CD4-positive, alpha-beta T cell (primary cell): ENCODE measurements at regions of chr2 and their contacts with region 1.

Region 1: DNA sequence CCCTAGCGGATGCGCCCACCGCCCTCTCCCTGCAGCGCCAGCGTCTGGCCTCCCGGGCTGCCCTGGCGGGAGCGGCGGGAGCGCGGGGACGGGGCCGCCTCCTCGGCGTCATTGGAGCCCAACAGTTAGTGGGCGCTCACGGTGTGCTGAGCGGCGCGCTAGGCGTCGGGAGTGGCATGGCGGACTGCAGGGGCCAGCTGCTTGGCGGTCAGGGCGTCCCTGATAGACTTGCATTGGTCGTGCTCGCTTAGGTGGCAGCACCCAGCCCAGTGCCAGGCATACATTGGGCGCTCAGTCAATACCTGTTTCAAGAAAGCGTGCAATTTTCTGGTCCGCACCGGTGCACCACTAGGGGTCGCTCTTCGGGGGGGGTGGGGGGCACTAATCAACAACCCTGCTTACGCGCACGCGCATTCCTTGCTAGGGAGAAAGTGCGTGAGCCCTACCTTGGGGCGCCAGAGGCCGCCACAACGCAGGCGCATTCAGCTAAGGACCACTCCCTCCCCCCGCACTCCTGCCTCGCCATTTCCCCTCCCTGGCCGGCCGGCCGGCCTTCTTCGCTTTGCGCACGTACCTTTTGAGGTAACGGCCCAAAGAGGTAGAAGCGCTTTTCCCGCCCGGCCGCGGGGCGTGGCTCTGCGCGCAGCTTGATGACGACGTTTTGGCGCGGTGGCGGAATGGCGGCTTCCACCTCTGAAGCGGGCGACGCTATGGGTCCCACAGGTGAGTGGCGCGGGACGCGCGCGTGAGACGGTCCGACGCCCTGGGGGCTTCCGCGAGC is 411 bp upstream of the MZT2A start:
- DNase-seq: peak; percentile 83 to 98 (median 93)
- ATAC-seq: peak; percentile 71
- H3K4me3 ChIP-seq: peak overlapping the region; percentile 83
- H3K4me3 Mint-ChIP-seq: peak overlapping the region; percentile 98
- H3K27ac ChIP-seq: peak overlapping the region; percentile 94 to 96
- H3K27ac Mint-ChIP-seq: peak overlapping the region; percentile 98
- H3K4me1 ChIP-seq: peaks cover 45% of the 10 kb centered on the region
- H3K4me1 Mint-ChIP-seq: peaks cover 30% of the 10 kb centered on the region
- H3K27me3 ChIP-seq: no peaks in the 10 kb centered on the region
- H3K27me3 Mint-ChIP-seq: no peaks in the 10 kb centered on the region
- CTCF ChIP-seq: peak; percentile 87

Region 2: GRCh38 chr2:130372055-130372832 is 1120.4 kb before region 1 on chr2:
- CTCF ChIA-PET with region 1: no interaction called
- POLR2A ChIA-PET with region 1: no interaction called
- intact Hi-C with region 1: loop called in 1 of 2 experiments (anchors 10 kb)
- DNase-seq: peak; percentile 57 to 85 (median 72)
- ATAC-seq: peak; percentile 83
- H3K4me3 ChIP-seq: peak overlapping the region; percentile 76
- H3K4me3 Mint-ChIP-seq: peak overlapping the region; percentile 92
- H3K27ac ChIP-seq: peak overlapping the region; percentile 70 to 80
- H3K27ac Mint-ChIP-seq: peak overlapping the region; percentile 97
- H3K4me1 ChIP-seq: peaks cover 71% of the 10 kb centered on the region
- H3K4me1 Mint-ChIP-seq: peaks cover 73% of the 10 kb centered on the region
- H3K27me3 ChIP-seq: no peaks in the 10 kb centered on the region
- H3K27me3 Mint-ChIP-seq: no peaks in the 10 kb centered on the region
- CTCF ChIP-seq: peak; percentile 67

Region 3: DNA sequence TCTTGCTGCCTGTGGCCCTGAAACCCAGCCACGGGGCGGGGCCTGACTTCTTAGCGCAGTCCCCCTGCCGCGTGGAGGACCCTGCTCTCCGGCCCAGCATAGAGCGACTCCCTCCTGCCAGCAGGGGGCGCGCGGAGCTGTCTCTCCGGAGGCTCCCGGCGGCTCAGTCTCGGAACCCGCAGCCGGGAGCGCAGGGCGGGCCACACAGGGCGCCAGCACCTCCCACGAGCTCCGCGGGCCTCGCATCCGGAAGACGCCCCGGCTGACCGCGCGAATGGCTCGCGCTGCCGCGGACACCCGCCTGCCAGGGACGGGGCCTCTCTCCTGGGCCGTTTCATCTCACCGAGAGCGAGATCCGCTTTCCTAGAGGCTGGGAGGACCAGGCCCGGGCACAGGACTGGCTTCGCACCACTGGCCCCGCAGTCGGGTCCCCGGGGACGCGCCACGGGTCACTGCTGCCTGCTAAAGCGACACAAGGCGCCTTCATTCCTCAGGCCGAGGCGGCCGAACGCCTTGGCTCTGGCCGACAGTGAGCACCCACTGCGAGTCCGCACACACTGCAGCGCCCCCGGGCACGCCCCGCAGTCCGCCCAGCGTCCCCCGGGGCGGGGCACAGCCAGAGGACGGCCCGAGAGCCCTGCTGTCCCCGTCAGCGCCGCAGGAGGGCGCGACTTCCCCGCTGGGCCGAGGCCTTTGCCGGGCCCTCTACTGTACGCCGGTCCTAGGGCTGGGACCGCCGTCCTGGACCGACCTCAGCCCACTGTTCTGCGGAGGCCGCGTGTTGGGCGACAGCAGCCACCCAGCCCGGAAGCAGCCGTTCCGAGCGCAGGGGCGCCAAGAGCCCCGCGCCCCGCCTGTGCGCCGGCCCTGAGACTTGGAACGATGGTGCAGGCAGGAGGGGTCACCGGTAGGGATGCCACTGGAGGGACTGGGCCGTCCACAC is 694.8 kb before region 1 on chr2:
- CTCF ChIA-PET with region 1: no interaction called
- POLR2A ChIA-PET with region 1: no interaction called
- intact Hi-C with region 1: loop called in 1 of 2 experiments (anchors 10 kb)
- DNase-seq: peak; percentile 84 to 96 (median 90)
- ATAC-seq: peak; percentile 88
- H3K4me3 ChIP-seq: peak overlapping the region; percentile 94
- H3K4me3 Mint-ChIP-seq: peak overlapping the region; percentile 85
- H3K27ac ChIP-seq: peak overlapping the region; percentile 74 to 87
- H3K27ac Mint-ChIP-seq: peak overlapping the region; percentile 71
- H3K4me1 ChIP-seq: peaks cover 17% of the 10 kb centered on the region
- H3K4me1 Mint-ChIP-seq: peaks cover 7% of the 10 kb centered on the region
- H3K27me3 ChIP-seq: peaks cover 0 to 2% of the 10 kb centered on the region in 2 experiments
- H3K27me3 Mint-ChIP-seq: peaks cover 4% of the 10 kb centered on the region
- CTCF ChIP-seq: peak; percentile 68

Region 4: DNA sequence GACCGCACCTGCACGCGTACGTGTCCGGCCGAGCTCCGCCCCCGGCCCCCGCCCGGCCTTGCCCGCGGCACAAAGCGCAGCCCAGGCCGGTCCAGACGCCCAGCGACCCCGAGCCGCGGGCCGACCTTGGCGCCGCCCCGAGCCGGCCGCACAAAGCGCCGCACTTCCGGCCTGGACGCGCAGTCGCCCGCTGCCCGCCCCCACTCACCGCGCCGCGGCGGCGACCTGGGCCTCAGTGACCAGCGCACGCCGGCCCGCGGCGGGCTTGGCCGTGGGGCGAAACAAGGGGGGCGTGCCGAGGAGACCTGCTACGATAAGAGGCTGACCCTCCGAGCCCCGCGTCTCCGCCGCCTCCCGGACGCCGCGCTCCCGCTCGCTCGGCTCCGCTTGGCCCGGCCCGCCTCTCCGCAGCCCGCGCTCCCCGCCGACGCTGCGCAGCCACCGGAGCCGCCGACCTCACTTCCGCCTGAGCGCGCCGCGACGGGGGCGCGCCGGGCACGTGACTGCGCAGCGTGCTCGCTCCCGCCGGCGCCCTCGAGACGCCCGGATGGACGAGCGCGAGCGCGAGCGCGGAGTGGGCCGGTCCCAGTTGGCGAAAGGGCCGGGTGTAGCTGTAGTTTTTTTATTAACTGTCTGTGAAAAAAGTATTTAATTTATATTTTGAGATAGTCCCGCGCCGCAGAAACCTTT is 399.5 kb before region 1 on chr2 and contains the start of gene FAM168B:
- CTCF ChIA-PET with region 1: interaction called, 3 read pairs
- POLR2A ChIA-PET with region 1: interaction called, 9 read pairs
- intact Hi-C with region 1: loop called in 1 of 2 experiments (anchors 5 kb)
- DNase-seq: peak; percentile 77 to 97 (median 88)
- ATAC-seq: peak; percentile 84
- H3K4me3 ChIP-seq: peak within 1 kb of the TSS; percentile 82
- H3K4me3 Mint-ChIP-seq: peak within 1 kb of the TSS; percentile 92
- H3K27ac ChIP-seq: peak within 1 kb of the TSS; percentile 79 to 90
- H3K27ac Mint-ChIP-seq: peak within 1 kb of the TSS; percentile 93
- H3K4me1 ChIP-seq: peaks cover 26% of the 10 kb centered on the region
- H3K4me1 Mint-ChIP-seq: peaks cover 32% of the 10 kb centered on the region
- H3K27me3 ChIP-seq: no peaks in the 10 kb centered on the region
- H3K27me3 Mint-ChIP-seq: no peaks in the 10 kb centered on the region
- CTCF ChIP-seq: no peak
- total RNA-seq, gene FAM168B: 74.1 to 76.4 TPM

Region 5: DNA sequence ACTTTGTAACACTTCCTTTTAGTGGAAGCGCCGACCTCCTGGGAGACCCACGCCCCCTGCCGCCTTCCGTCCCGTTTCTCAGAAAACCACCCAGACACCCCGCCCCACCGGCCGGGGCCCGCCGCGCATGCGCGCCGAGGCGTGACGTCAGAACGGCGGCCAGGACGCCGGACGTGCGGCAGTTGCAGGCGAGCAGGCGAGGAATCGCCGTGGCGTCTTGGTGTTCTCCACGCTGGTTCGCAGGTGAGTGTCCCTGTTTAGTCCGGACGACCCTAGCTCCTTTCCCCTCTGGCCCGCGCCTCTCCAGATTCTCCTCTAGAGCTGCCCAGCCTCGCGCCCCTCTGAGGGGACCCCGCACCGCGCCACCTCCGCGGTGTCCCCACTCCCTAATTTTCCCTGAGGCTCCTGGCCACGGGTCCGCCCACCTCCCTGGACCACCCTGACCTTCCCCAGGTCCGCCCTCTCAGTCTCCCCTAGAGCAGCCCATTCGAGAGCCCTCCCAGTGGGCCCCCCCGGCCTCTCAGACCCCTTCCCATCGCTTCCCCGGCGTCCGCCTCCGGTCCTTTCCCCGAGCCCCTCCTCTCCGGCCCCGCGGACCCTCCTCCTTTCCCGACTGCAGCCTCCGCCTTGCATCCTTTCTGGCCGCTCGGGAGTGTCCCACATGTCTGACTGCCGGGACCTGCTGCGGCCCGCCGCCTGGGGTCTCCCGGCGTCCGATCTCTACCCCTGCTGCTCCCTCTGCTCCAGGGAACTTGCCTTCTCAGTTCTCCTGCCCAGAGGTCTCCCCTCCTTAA is 387.3 kb before region 1 on chr2 and contains the start of gene PLEKHB2:
- CTCF ChIA-PET with region 1: interaction called, 6 read pairs
- POLR2A ChIA-PET with region 1: no interaction called
- intact Hi-C with region 1: loop called in 1 of 2 experiments (anchors 5 kb)
- DNase-seq: peak; percentile 83 to 96 (median 92)
- ATAC-seq: peak; percentile 61
- H3K4me3 ChIP-seq: peak within 1 kb of the TSS; percentile 97
- H3K4me3 Mint-ChIP-seq: peak within 1 kb of the TSS; percentile 98
- H3K27ac ChIP-seq: peak within 1 kb of the TSS; percentile 94 to 96
- H3K27ac Mint-ChIP-seq: peak within 1 kb of the TSS; percentile 98
- H3K4me1 ChIP-seq: peaks cover 43% of the 10 kb centered on the region
- H3K4me1 Mint-ChIP-seq: peaks cover 58% of the 10 kb centered on the region
- H3K27me3 ChIP-seq: no peaks in the 10 kb centered on the region
- H3K27me3 Mint-ChIP-seq: no peaks in the 10 kb centered on the region
- CTCF ChIP-seq: no peak
- total RNA-seq, gene PLEKHB2: 66.9 to 71.7 TPM

Region 6: GRCh38 chr2:131154071-131154531 is 338.5 kb before region 1 on chr2:
- CTCF ChIA-PET with region 1: no interaction called
- POLR2A ChIA-PET with region 1: no interaction called
- intact Hi-C with region 1: loop called in 1 of 2 experiments (anchors 10 kb)
- DNase-seq: peak; percentile 41 to 82 (median 56)
- ATAC-seq: peak; percentile 88
- H3K4me3 ChIP-seq: no peak overlapping the region
- H3K4me3 Mint-ChIP-seq: no peak overlapping the region
- H3K27ac ChIP-seq: no peak overlapping the region
- H3K27ac Mint-ChIP-seq: no peak overlapping the region
- H3K4me1 ChIP-seq: peaks cover 20% of the 10 kb centered on the region
- H3K4me1 Mint-ChIP-seq: peaks cover 7% of the 10 kb centered on the region
- H3K27me3 ChIP-seq: no peaks in the 10 kb centered on the region
- H3K27me3 Mint-ChIP-seq: no peaks in the 10 kb centered on the region
- CTCF ChIP-seq: peak; percentile 76

Region 7: GRCh38 chr2:131682122-131682944 is 189.7 kb after region 1 on chr2:
- CTCF ChIA-PET with region 1: no interaction called
- POLR2A ChIA-PET with region 1: interaction called, 3 read pairs
- intact Hi-C with region 1: loop called in 1 of 2 experiments (anchors 5 kb)
- DNase-seq: peak; percentile 41 to 82 (median 61)
- ATAC-seq: peak; percentile 98
- H3K4me3 ChIP-seq: peak overlapping the region; percentile 76
- H3K4me3 Mint-ChIP-seq: peak overlapping the region; percentile 92
- H3K27ac ChIP-seq: peak overlapping the region in 1 of 2 donors; percentile 21
- H3K27ac Mint-ChIP-seq: peak overlapping the region; percentile 76
- H3K4me1 ChIP-seq: peaks cover 16% of the 10 kb centered on the region
- H3K4me1 Mint-ChIP-seq: peaks cover 54% of the 10 kb centered on the region
- H3K27me3 ChIP-seq: no peaks in the 10 kb centered on the region
- H3K27me3 Mint-ChIP-seq: peaks cover 6% of the 10 kb centered on the region
- CTCF ChIP-seq: peak; percentile 19